Cardiac septum (tissue), 1 donor: ENCODE measurements at regions of chr13 and their contacts with region 1.

Region 1: GRCh38 chr13:33228648-33229445 is 56.7 kb downstream of the STARD13 start:
- DNase-seq: no peak

Region 2: DNA sequence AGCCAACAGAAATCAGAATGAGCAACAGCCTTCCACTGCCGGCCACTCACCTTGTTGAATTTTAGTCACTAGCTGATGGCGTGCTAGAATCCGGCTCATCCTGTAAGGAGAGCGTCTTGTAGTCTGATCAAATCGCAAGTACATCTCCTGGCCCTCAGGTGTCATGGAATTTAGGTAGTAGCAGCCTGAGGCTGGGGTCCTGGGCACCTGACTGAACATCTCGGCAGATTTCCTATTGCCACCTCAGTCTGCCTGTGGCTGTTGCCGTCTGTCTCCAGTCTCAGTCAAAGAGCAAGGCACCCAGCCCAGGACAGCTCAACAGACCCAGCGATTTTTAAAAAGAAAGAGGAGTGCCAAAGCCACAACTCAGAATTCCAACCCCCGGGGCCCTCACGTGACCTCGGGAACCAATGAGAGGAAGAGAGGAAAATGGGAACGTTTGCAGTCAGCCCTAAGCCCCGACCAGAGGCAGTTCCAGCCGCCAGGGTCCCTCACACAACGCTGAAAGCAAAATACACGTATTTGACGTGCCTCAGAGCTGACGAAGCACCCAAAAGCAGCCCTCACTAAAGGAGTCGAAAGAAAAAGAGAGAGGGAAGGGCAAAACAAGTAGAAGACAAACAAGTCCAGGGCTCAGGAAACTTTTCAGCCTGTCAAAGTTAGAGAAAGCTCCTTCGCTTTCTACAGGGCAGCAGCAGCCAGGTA is 56.7 kb after region 1 on chr13 and contains the start of gene STARD13:
- intact Hi-C with region 1: loop called (anchors 2 kb)
- DNase-seq: peak; percentile 96
- total RNA-seq, gene STARD13: 26.9 TPM

Region 3: GRCh38 chr13:33487575-33488243 is 258.9 kb after region 1 on chr13:
- intact Hi-C with region 1: loop called (anchors 10 kb)
- DNase-seq: no peak